Activated naive CD4-positive, alpha-beta T cell treated with anti-CD3 and anti-CD28 coated beads for 36 hours (primary cell): ENCODE measurements at regions of chr19 and their contacts with region 1.

Region 1: GRCh38 chr19:19643158-19644053 is at the start of gene GMIP:
- DNase-seq: peak; percentile 91
- H3K4me3 Mint-ChIP-seq: peak within 1 kb of the TSS; percentile 92
- H3K27ac Mint-ChIP-seq: peak within 1 kb of the TSS; percentile 98
- H3K4me1 Mint-ChIP-seq: peaks cover 12% of the 10 kb centered on the region
- H3K27me3 Mint-ChIP-seq: no peaks in the 10 kb centered on the region
- total RNA-seq, gene GMIP: 38.7 to 40.6 TPM

Region 2: GRCh38 chr19:19515764-19516519 is 127.5 kb before region 1 on chr19 and contains the start of gene NDUFA13:
- CTCF ChIA-PET with region 1: no interaction called
- intact Hi-C with region 1: loop called (anchors 5 kb)
- DNase-seq: peak; percentile 96
- H3K4me3 Mint-ChIP-seq: peak within 1 kb of the TSS; percentile 86
- H3K27ac Mint-ChIP-seq: peak within 1 kb of the TSS; percentile 96
- H3K4me1 Mint-ChIP-seq: peaks cover 36% of the 10 kb centered on the region
- H3K27me3 Mint-ChIP-seq: no peaks in the 10 kb centered on the region
- total RNA-seq, gene NDUFA13: 351 to 376 TPM

Region 3: DNA sequence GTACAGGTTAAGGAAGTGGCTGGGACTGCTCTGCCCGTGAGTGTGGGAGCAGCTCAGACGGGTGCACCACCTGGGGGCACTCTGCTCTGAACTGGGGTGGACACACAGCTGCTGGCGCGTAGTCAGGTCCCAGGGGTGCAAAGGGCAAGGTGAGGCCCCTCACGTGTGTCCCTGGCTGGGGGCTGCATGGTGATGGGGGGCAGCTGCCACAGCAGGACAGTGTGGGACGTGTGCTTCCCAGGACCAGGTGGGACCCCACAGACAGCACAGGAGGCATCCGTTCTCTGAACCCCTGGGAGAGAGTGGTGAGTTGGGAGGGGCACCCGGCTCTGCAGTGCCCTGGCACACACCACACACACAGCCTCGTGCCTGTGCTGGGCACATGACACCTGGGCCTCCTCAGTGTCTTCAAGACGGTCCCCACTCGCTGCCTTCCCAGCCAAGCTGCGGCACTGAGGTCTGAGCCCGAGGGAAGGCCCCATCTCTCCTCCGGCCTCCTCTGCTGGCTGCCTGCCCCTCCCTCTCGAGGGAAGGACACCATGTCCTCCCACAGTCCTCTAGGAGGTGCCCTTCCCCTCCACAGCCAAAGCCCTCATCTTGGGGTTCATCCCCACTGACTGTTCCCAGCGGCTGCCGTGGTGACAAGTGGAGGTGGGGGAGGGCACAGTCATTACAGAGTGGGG is 80.6 kb before region 1 on chr19:
- CTCF ChIA-PET with region 1: interaction called, 7 read pairs
- intact Hi-C with region 1: loop called (anchors 1 kb)
- DNase-seq: peak; percentile 65
- H3K4me3 Mint-ChIP-seq: no peak overlapping the region
- H3K27ac Mint-ChIP-seq: peak overlapping the region; percentile 50
- H3K4me1 Mint-ChIP-seq: peaks cover 22% of the 10 kb centered on the region
- H3K27me3 Mint-ChIP-seq: no peaks in the 10 kb centered on the region

Region 4: GRCh38 chr19:19597809-19598306 is 45.5 kb before region 1 on chr19:
- CTCF ChIA-PET with region 1: interaction called, 3 read pairs
- intact Hi-C with region 1: loop called (anchors 2 kb)
- DNase-seq: peak; percentile 78
- H3K4me3 Mint-ChIP-seq: peak overlapping the region; percentile 75
- H3K27ac Mint-ChIP-seq: peak overlapping the region; percentile 100
- H3K4me1 Mint-ChIP-seq: peaks cover 85% of the 10 kb centered on the region
- H3K27me3 Mint-ChIP-seq: no peaks in the 10 kb centered on the region

Region 5: DNA sequence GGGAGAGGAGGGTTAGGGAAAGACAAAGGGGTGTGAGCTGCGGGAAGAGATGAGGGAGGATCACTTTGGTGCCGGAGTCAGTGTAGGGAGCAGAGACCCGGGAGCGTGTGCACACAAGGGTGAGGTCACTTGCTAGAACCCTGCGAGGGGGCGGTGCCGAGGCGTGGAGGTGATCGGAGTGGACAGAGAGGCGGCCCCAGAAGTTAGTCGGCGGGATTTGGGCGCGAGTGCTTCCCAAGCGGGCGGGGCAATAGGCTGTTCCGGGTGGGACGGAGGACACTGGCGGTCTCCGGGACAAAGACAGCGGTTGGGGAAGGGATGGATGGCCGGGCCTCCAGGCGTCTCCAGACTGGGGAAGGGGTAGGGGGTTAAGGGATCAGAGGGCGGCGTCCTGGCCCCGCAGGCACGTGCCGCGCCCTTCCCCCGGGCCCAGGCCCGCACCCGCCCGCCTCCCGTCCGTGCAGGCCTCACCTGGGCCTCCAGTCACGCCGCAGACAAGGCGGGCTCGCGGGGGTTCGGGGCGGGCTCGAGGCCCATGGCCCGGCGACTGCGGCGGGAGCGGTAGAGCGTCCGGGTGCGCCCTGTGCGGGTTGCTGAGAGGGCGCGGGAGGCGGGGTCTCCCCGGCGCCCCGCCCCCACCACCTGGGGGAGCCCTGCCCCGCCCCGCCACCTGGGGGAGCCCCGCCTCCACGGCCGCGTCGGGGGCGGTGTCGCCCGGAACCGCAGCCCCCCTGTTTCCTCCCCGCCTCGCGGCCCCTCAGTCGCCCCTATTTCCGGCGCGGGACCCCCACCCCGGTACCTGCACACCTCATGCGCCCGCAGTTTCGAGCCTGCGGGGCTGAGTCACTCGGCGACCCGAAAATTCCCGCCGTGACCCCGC is 15.5 kb before region 1 on chr19 and contains the start of gene LPAR2:
- CTCF ChIA-PET with region 1: interaction called, 4 read pairs
- intact Hi-C with region 1: loop called (anchors 1 kb)
- DNase-seq: peak; percentile 65
- H3K4me3 Mint-ChIP-seq: peak within 1 kb of the TSS; percentile 89
- H3K27ac Mint-ChIP-seq: peak within 1 kb of the TSS; percentile 85
- H3K4me1 Mint-ChIP-seq: peaks cover 29% of the 10 kb centered on the region
- H3K27me3 Mint-ChIP-seq: no peaks in the 10 kb centered on the region
- total RNA-seq, gene LPAR2: 20.2 to 20.7 TPM